ENCODE measurements at regions of chr11 and their contacts with region 1.

Region 1: GRCh38 chr11:94417386-94417987 is 16.3 kb upstream of the GPR83 start:
- DNase-seq: no peak

Region 2: GRCh38 chr11:93895106-93895862 is 522.2 kb before region 1 on chr11:
- intact Hi-C with region 1: loop called (anchors 2 kb)
- DNase-seq: peak in 1 of 10 donors; percentile 2

Region 3: GRCh38 chr11:94433049-94433448 is 15.6 kb after region 1 on chr11:
- intact Hi-C with region 1: no loop called
- DNase-seq: no peak

Region 4: GRCh38 chr11:94457118-94458029 is 39.9 kb after region 1 on chr11:
- intact Hi-C with region 1: no loop called
- DNase-seq: no peak

Region 5: GRCh38 chr11:94623120-94623735 is 205.7 kb after region 1 on chr11:
- intact Hi-C with region 1: no loop called
- DNase-seq: peak in 3 of 10 donors; percentile 17 to 36 (median 20)

Measured in posterior cingulate gyrus (tissue), 11 donors.